ENCODE measurements at regions of chr11 and their contacts with region 1.

Region 1: GRCh38 chr11:103601225-103601846 is 435.1 kb upstream of the DDI1 start:
- DNase-seq: peak; percentile 75
- H3K4me3 Mint-ChIP-seq: no peak overlapping the region
- H3K27ac Mint-ChIP-seq: no peak overlapping the region
- H3K4me1 Mint-ChIP-seq: no peaks in the 10 kb centered on the region
- H3K27me3 Mint-ChIP-seq: peaks cover 12% of the 10 kb centered on the region
- CTCF ChIP-seq: peak; percentile 85

Region 2: DNA sequence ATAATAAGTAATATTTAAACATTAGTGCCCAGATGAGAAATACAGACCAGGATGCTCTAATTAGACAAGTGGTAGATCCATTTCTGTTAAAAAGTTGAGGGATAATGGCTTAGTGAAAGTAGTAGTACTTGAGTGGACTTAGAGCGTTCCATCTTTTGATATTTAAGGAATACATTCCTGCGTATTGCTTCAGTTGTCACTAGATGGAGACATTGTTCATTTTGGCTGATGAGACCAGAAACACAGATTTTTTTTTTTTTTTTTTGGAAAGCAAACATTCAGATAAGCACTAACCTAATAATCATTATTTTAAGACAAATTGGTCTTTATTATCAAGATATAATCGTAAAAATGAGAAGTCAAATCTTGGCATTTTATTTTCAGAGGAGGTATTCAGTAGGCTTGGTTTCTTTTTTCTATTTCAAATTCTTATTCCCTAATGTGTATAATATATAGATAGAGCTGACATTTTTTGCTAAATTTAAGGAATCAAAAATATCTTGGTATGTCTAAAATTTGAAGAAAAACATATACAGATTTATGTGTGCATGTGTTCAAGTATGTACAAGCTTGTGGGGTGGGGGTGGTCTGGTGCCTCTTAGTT is 399.2 kb before region 1 on chr11:
- CTCF ChIA-PET with region 1: interaction called, 5 read pairs
- POLR2A ChIA-PET with region 1: no interaction called
- intact Hi-C with region 1: loop called (anchors 1 kb)
- DNase-seq: peak; percentile 54
- H3K4me3 Mint-ChIP-seq: no peak overlapping the region
- H3K27ac Mint-ChIP-seq: no peak overlapping the region
- H3K4me1 Mint-ChIP-seq: no peaks in the 10 kb centered on the region
- H3K27me3 Mint-ChIP-seq: no peaks in the 10 kb centered on the region
- CTCF ChIP-seq: peak; percentile 37

Region 3: DNA sequence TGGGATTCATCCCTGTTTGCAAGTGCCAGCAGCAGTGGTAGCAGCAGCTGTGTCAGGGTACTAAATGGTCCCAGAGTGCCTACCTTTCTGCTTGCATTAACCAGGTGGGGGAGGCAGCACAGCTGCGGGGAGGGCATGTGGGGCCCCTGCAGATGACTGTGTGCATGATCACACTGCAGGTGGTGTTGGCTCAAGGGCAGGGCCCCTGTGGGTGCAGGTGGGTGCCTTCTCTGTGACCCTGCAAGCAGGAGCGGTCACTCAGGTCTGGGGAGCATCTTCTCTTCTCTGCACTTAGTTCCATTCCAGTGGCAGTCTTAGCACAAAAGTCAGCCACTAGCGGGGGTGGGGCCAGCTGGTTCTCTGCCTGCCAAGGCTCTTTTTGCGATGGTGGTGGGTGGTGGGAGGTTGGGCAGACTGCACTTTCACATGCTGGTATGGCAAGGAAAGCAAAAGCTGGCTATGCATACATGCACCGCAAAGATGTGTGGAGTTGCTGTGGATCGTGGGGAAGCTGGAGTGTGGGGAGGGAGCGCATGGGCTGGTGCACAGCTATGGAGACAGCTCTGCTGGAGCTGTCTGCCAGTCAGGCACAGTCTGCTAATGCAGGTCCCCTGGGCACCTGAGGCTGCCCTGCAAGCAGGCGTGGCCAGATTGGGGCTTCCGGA is 335.0 kb before region 1 on chr11:
- CTCF ChIA-PET with region 1: no interaction called
- POLR2A ChIA-PET with region 1: no interaction called
- intact Hi-C with region 1: no loop called
- DNase-seq: no peak
- H3K4me3 Mint-ChIP-seq: no peak overlapping the region
- H3K27ac Mint-ChIP-seq: no peak overlapping the region
- H3K4me1 Mint-ChIP-seq: no peaks in the 10 kb centered on the region
- H3K27me3 Mint-ChIP-seq: no peaks in the 10 kb centered on the region
- CTCF ChIP-seq: no peak

Region 4: GRCh38 chr11:103326070-103326794 is 275.1 kb before region 1 on chr11:
- CTCF ChIA-PET with region 1: interaction called, 63 read pairs
- POLR2A ChIA-PET with region 1: interaction called, 3 read pairs
- intact Hi-C with region 1: loop called (anchors 1 kb)
- DNase-seq: peak; percentile 75
- H3K4me3 Mint-ChIP-seq: no peak overlapping the region
- H3K27ac Mint-ChIP-seq: peak overlapping the region; percentile 55
- H3K4me1 Mint-ChIP-seq: peaks cover 7% of the 10 kb centered on the region
- H3K27me3 Mint-ChIP-seq: no peaks in the 10 kb centered on the region
- CTCF ChIP-seq: peak; percentile 82

Region 5: DNA sequence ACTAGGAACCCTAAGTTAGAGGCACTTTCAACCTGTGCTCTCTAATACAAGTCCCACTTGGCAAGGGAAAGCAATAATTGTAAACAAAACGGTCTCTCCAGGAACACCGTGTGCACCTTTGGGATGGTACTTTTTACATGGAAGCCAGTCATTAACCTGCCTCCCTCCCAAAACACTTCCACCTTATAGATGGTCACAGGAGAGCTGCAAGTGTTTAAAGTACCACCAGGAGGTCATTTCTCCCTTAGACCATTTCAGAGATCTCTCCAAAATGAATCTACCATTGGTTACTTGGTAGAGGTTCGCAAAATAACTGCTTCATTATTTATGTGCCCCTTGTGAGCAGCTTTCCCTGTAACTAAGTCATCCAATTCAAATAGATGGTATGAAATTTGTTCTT is 116.8 kb before region 1 on chr11:
- CTCF ChIA-PET with region 1: interaction called, 4 read pairs
- POLR2A ChIA-PET with region 1: no interaction called
- intact Hi-C with region 1: loop called (anchors 5 kb)
- DNase-seq: no peak
- H3K4me3 Mint-ChIP-seq: no peak overlapping the region
- H3K27ac Mint-ChIP-seq: no peak overlapping the region
- H3K4me1 Mint-ChIP-seq: no peaks in the 10 kb centered on the region
- H3K27me3 Mint-ChIP-seq: no peaks in the 10 kb centered on the region
- CTCF ChIP-seq: no peak